Mammary epithelial cell (primary cell): ENCODE measurements at regions of chr6 and their contacts with region 1.

Region 1: DNA sequence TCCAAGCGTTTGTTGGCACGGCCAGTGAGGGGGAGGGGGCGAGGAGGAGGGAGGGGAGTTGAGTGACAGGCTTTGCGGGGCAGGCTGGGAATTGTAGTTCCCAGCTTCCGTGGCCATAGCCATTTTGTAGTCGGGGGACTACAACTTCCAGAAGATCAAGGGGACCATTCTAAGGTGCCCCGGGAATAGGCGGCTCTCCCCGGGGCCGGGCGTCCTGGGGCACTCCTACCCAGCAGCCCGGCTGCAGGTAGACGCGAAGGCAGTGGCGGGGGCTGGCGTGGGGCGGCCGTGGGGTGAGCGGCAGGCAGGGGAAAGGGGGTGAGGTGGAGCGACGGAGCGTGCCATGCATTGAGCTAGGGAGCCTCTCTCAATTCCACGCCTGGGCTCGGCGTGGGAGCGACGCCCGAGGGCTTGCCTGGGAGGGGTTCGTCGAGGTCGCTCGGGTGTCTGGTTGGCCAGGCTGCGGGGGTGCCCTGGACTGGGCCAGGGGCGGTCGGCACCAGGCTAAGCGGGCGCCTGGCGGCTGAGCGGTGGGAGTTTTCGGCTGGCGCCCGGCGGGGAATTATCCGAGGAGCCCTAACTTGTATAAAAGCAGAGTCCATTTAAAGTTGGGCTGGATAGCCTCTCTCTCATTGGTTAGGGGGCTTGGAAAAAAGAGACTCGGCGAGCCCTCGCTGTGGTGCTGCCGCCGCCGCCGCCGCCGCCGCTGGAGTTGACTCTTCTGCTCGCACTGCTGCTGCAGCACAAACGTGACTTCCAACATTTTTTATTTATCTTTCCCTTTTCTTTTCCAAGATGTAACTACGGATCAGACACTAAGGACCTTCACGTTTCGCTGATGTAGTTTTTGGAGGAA is at the start of gene JARID2:
- DNase-seq: peak; percentile 96
- H3K4me3 ChIP-seq: peak within 1 kb of the TSS; percentile 70 to 95 (median 82)
- H3K27ac ChIP-seq: peak within 1 kb of the TSS; percentile 86
- H3K4me1 ChIP-seq: peaks cover 20% of the 10 kb centered on the region
- H3K27me3 ChIP-seq: no peaks in the 10 kb centered on the region
- CTCF ChIP-seq: no peak
- total RNA-seq, gene JARID2: 10.3 to 25.8 TPM

Region 2: DNA sequence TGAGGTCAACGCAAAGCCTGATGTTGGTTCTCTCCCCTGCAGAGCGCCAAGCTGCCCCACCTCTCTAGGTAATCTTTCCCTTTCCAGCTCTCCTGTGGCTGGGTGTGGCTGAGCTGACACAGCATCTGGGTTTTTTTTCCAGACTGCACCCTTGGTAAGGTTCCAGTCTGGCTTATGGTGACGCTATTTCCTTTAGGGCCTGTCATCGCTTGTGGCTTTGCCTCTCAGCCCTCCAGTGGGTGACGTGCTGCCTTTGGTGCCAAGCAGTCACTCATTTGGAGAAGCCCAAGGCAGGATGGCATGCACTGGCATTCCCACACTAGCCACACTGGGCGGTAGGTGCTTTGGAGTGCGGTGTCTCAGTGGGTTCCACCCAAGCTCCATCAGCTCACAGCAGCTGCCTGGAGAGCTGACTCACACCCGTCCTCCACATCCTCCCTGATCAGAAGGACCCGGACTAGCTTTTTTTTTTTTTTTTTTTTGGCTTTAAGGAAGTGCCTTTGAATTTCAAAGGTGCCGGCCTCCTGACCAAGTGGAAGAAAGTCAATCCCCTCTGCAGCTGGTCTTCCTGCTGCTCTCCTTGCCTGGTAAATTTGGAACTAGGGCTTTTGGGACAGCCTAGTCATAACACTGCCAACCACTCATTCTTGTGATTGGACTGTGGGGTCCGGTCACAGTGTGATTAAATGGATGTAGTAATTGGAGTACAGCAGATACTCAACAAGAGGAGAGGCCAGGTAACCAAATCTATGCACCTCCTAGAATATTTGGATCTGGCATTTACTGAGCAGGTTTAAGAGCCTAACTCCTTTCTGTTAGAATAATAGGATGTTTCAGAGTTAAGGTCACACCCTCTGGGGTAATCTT is 974.4 kb before region 1 on chr6:
- CTCF ChIA-PET with region 1: no interaction called
- dilution Hi-C with region 1: no loop called
- in situ Hi-C with region 1: no loop called
- intact Hi-C with region 1: loop called (anchors 1 kb)
- DNase-seq: peak; percentile 100
- H3K4me3 ChIP-seq: no peak overlapping the region
- H3K27ac ChIP-seq: peak overlapping the region; percentile 98
- H3K4me1 ChIP-seq: peaks cover 50% of the 10 kb centered on the region
- H3K27me3 ChIP-seq: no peaks in the 10 kb centered on the region
- CTCF ChIP-seq: peak in 1 of 2 donors; percentile 39

Region 3: GRCh38 chr6:14711056-14711703 is 534.4 kb before region 1 on chr6:
- CTCF ChIA-PET with region 1: no interaction called
- dilution Hi-C with region 1: no loop called
- in situ Hi-C with region 1: no loop called
- intact Hi-C with region 1: loop called (anchors 5 kb)
- DNase-seq: peak; percentile 78
- H3K4me3 ChIP-seq: no peak overlapping the region
- H3K27ac ChIP-seq: peak overlapping the region; percentile 67
- H3K4me1 ChIP-seq: peaks cover 49% of the 10 kb centered on the region
- H3K27me3 ChIP-seq: no peaks in the 10 kb centered on the region
- CTCF ChIP-seq: peak; percentile 70 to 86

Region 4: DNA sequence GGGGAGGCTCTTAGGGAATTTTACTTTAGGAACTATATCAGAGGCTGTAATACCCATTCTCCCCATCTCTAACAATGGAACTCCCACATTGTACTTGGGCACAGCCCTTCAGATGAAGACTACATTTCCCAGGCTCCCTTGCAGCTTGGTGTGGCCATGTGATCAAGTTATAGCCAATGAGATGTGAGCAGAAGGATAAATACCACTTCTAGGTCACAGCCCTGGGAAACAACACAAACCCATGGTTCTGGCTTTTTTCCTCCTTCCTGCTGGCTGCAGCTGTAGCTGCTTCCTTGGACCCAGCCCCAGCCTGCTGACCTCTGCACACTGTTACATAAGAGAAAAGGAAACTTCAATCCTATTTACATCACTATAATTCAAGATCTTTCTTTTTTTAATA is 445.7 kb before region 1 on chr6:
- CTCF ChIA-PET with region 1: no interaction called
- dilution Hi-C with region 1: no loop called
- in situ Hi-C with region 1: no loop called
- intact Hi-C with region 1: loop called (anchors 5 kb)
- DNase-seq: peak; percentile 71
- H3K4me3 ChIP-seq: no peak overlapping the region
- H3K27ac ChIP-seq: no peak overlapping the region
- H3K4me1 ChIP-seq: peaks cover 17% of the 10 kb centered on the region
- H3K27me3 ChIP-seq: no peaks in the 10 kb centered on the region
- CTCF ChIP-seq: no peak

Region 5: DNA sequence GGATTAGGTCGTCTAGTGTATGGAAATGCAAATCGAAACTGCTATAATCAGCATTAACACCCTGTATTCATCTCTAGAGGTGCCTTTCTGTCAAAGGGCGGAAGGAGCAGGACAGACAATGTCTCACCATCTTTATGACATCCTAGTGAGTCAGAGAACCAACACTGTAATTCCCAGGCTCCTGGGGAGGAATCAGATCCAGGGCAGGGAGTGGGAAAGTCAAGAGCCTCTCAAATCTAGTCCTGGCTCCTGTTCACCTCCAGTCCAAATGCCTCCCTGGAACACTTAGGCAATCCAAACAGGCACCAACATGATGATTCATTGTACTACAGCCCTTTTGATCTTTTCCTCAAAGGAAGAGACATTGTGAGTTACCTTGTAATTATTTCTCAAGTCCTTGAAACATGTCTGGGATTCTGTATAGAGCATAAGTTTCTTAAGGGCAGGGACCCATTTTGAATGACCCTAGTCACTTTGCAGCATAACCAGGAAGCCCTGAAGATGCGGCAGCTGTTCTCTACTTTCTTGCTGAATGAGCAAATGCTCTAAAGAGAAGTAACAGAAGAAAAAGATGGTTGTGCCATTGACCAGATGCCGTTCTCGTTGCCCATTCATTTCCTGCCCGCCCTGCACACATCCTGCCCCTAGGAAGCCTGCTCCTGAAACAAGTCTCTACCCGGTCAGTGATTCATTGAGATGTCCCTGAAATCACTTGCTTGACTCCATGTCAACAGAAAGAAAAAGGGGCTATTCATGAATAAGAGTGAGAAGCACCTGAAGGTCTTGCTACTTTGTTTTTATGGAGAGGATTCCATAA is 112.5 kb before region 1 on chr6:
- CTCF ChIA-PET with region 1: no interaction called
- dilution Hi-C with region 1: no loop called
- in situ Hi-C with region 1: loop called in 1 of 2 experiments (anchors 10 kb)
- intact Hi-C with region 1: loop called (anchors 1 kb)
- DNase-seq: peak; percentile 99
- H3K4me3 ChIP-seq: peak overlapping the region in 2 of 3 experiments; percentile 35 to 36
- H3K27ac ChIP-seq: peak overlapping the region; percentile 92
- H3K4me1 ChIP-seq: peaks cover 30% of the 10 kb centered on the region
- H3K27me3 ChIP-seq: no peaks in the 10 kb centered on the region
- CTCF ChIP-seq: no peak

Region 6: DNA sequence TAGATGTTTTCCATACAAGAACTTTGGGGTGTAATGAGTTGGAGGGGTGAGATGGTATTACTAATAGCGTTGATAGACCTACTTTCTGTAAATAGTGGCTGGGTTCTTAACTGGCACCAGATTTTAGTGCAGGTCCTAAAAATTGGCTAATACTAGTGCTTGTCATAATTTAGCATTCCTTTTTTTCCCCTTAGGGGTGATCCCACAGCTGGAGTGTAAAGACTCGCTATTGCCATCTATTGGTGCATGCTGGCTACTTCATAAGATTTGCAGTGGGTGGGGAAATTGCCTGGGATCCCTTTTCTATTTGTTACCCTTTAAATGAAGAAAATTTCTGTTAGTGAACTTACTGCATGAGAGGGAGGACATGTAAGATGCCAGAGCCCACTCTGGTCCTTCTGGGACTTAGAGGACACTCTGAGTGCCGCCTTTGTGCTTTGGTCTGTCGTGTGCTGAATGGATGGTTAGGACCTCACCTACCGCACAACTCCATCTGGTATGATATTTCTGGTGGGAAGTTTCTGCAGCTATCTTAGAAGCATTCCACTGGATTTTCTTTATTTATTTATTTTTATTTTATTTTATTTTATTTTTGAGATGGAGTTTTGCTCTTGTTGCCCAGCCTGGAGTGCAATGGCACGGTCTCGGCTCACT is 195.8 kb after region 1 on chr6:
- CTCF ChIA-PET with region 1: interaction called, 3 read pairs
- dilution Hi-C with region 1: no loop called
- in situ Hi-C with region 1: loop called in 1 of 2 experiments (anchors 25 kb)
- intact Hi-C with region 1: loop called (anchors 1 kb)
- DNase-seq: peak; percentile 50
- H3K4me3 ChIP-seq: no peak overlapping the region
- H3K27ac ChIP-seq: no peak overlapping the region
- H3K4me1 ChIP-seq: peaks cover 33% of the 10 kb centered on the region
- H3K27me3 ChIP-seq: no peaks in the 10 kb centered on the region
- CTCF ChIP-seq: peak; percentile 81 to 88

Region 7: GRCh38 chr6:16206595-16207037 is 961.0 kb after region 1 on chr6:
- CTCF ChIA-PET with region 1: no interaction called
- dilution Hi-C with region 1: no loop called
- in situ Hi-C with region 1: no loop called
- intact Hi-C with region 1: loop called (anchors 5 kb)
- DNase-seq: peak; percentile 64
- H3K4me3 ChIP-seq: no peak overlapping the region
- H3K27ac ChIP-seq: no peak overlapping the region
- H3K4me1 ChIP-seq: no peaks in the 10 kb centered on the region
- H3K27me3 ChIP-seq: no peaks in the 10 kb centered on the region
- CTCF ChIP-seq: peak; percentile 86 to 97